ENCODE measurements at regions of chr13 and their contacts with region 1.

Region 1: GRCh38 chr13:114226699-114227323 is 7.9 kb upstream of the CDC16 start:
- DNase-seq: peak; percentile 75 to 90
- H3K4me3 ChIP-seq: no peak overlapping the region
- H3K27ac ChIP-seq: no peak overlapping the region
- H3K4me1 ChIP-seq: peaks cover 0 to 10% of the 10 kb centered on the region in 2 donors
- H3K27me3 ChIP-seq: no peaks in the 10 kb centered on the region
- CTCF ChIP-seq: peak; percentile 90 to 97 (median 95)
- POLR2A ChIP-seq: no peak

Region 2: DNA sequence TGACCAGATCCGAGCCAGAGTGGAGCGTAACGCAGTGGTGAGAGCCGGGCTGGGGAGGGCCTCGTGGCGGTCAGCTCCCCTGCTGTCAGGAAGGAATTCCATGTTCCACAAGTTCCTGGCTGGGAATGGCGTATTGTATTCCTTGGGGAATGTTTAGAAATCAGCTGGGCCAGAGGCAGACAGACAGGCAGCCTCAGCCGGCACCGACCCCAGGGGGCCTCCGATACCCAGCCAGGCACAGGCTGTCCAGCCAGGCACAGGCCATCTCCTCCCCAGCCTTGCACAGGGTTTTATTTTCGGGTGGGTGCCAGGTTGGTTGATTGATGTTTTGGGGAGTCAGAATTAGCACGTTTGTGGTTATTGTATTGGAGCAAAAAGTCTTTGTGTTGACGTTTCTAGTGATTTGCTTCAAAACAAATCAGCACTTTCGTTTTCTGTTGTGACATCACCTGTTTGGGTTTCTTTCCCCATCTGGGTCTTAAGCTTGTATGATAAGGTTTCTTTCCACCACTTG is 1384.4 kb before region 1 on chr13:
- intact Hi-C with region 1: no loop called
- DNase-seq: no peak
- H3K4me3 ChIP-seq: no peak overlapping the region
- H3K27ac ChIP-seq: peak overlapping the region in 1 of 2 donors; percentile 25
- H3K4me1 ChIP-seq: no peaks in the 10 kb centered on the region
- H3K27me3 ChIP-seq: no peaks in the 10 kb centered on the region
- CTCF ChIP-seq: no peak
- POLR2A ChIP-seq: no peak

Region 3: GRCh38 chr13:113383089-113383488 is 843.7 kb before region 1 on chr13:
- intact Hi-C with region 1: no loop called
- DNase-seq: no peak
- H3K4me3 ChIP-seq: no peak overlapping the region
- H3K27ac ChIP-seq: no peak overlapping the region
- H3K4me1 ChIP-seq: no peaks in the 10 kb centered on the region
- H3K27me3 ChIP-seq: no peaks in the 10 kb centered on the region
- CTCF ChIP-seq: no peak
- POLR2A ChIP-seq: no peak

Region 4: GRCh38 chr13:113897161-113897560 is 329.6 kb before region 1 on chr13:
- intact Hi-C with region 1: no loop called
- DNase-seq: peak; percentile 47 to 86
- H3K4me3 ChIP-seq: no peak overlapping the region
- H3K27ac ChIP-seq: peak overlapping the region in 1 of 2 donors; percentile 8
- H3K4me1 ChIP-seq: no peaks in the 10 kb centered on the region
- H3K27me3 ChIP-seq: no peaks in the 10 kb centered on the region
- CTCF ChIP-seq: no peak
- POLR2A ChIP-seq: no peak

Region 5: DNA sequence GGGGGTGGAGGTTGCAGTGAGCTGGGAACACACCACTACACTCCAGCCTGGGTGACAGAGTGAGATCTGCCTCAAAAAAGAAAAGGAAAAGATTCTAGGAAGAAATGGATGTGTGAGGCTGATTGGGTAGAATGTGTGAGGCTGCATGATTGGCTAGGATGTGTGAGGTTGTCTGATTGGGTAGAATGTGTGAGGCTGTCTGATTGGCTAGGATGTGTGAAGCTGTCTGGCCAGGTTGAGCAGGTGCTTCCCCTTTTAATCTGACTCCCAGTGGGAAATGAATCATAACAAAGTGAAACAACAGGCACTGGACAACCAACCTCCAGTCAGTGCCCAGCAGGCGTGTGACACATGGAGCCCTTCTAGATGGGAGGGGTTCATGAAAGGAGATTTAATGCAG is 267.6 kb before region 1 on chr13:
- intact Hi-C with region 1: loop called (anchors 5 kb)
- DNase-seq: no peak
- H3K4me3 ChIP-seq: no peak overlapping the region
- H3K27ac ChIP-seq: no peak overlapping the region
- H3K4me1 ChIP-seq: no peaks in the 10 kb centered on the region
- H3K27me3 ChIP-seq: no peaks in the 10 kb centered on the region
- CTCF ChIP-seq: no peak
- POLR2A ChIP-seq: no peak

Region 6: GRCh38 chr13:114281351-114282040 is 54.7 kb after region 1 on chr13 and contains the start of gene UPF3A:
- intact Hi-C with region 1: no loop called
- DNase-seq: peak; percentile 85 to 91
- H3K4me3 ChIP-seq: peak within 1 kb of the TSS; percentile 72 to 77 (median 76)
- H3K27ac ChIP-seq: peak within 1 kb of the TSS; percentile 96 to 98
- H3K4me1 ChIP-seq: peaks cover 3 to 8% of the 10 kb centered on the region in 2 donors
- H3K27me3 ChIP-seq: no peaks in the 10 kb centered on the region
- CTCF ChIP-seq: no peak
- POLR2A ChIP-seq: peak; percentile 68
- total RNA-seq, gene UPF3A: 48.5 to 52.8 (median 49.6) TPM

Measured in breast epithelium (tissue), 4 donors.